ENCODE measurements at regions of chr6 and their contacts with region 1.

Region 1: GRCh38 chr6:163413345-163414116 is 987 bp upstream of the QKI start:
- DNase-seq: peak; percentile 92 to 98 (median 97)
- ATAC-seq: peak; percentile 60
- H3K4me3 ChIP-seq: peak overlapping the region; percentile 87
- H3K27ac ChIP-seq: peak overlapping the region; percentile 94
- H3K4me1 ChIP-seq: peaks cover 0 to 12% of the 10 kb centered on the region in 2 experiments; a peak in 4 of 5 replicates
- H3K27me3 ChIP-seq: no peaks in the 10 kb centered on the region
- CTCF ChIP-seq: 0 out of 6 replicates have a peak, but pooled peaks of 1 of the 3 experiments have one; percentile 6
- EP300 ChIP-seq: no peak
- POLR2A ChIP-seq: peak; percentile 79
- RAD21 ChIP-seq: 0 out of 4 replicates have a peak, but pooled peaks of 1 of the 2 experiments have one; percentile 1

Region 2: DNA sequence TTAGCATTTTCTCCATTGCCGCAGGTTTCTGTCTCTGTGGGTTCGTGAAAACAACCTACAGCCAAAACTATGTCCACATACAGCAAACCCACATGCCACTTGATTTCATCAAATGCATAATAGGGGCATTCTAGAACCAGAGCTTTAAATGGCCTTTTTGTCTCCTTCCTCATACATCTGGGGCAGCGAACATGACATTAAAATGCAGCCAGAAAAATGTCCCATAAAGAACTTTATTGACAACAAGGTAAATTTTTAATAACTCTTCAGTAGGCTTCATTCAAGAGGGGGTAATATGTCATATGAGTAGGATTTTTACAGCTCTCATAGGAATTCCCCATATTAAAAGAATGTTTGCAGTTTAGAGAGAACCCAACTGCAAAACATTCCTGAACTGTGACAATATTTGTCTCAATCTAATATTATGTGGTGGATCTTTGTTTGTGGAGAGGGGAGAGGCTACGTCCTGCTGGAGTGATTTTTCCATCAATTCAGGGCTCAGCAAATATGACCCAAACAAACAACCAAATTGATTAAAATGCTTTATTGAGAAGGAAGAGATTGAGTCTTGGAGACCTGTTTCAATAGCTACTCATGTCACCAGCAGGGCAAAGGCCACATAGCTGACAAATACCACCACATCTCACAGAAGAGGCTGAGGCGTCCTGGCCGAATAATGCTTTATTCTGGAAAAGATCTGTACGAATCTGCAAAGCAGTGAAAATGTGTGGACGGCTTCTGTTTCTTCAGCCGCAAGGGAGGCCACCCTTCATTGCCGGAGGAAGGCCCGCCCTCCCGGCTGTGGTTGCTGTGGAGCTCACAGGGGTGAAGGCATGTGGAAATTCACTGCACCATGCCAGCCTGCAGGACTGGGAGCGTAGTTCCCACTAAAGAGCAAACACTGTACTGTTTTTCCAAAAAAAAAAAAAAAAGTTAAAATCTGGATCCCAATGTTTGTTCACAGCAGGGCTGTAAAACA is 88.8 kb before region 1 on chr6:
- CTCF ChIA-PET with region 1: no interaction called
- POLR2A ChIA-PET with region 1: no interaction called
- in situ Hi-C with region 1: no loop called
- intact Hi-C with region 1: no loop called
- DNase-seq: no peak
- ATAC-seq: no peak
- H3K4me3 ChIP-seq: no peak overlapping the region
- H3K27ac ChIP-seq: no peak overlapping the region
- H3K4me1 ChIP-seq: no peaks in the 10 kb centered on the region
- H3K27me3 ChIP-seq: peaks cover 40 to 43% of the 10 kb centered on the region in 2 experiments
- CTCF ChIP-seq: no peak
- EP300 ChIP-seq: no peak
- POLR2A ChIP-seq: no peak
- RAD21 ChIP-seq: no peak

Region 3: GRCh38 chr6:163554663-163555062 is 141.1 kb after region 1 on chr6:
- CTCF ChIA-PET with region 1: interaction called, 3 read pairs
- POLR2A ChIA-PET with region 1: no interaction called
- in situ Hi-C with region 1: no loop called
- intact Hi-C with region 1: loop called (anchors 1 kb)
- DNase-seq: peak; percentile 47 to 71 (median 54)
- ATAC-seq: peak; percentile 91
- H3K4me3 ChIP-seq: no peak overlapping the region
- H3K27ac ChIP-seq: no peak overlapping the region
- H3K4me1 ChIP-seq: no peaks in the 10 kb centered on the region
- H3K27me3 ChIP-seq: no peaks in the 10 kb centered on the region
- CTCF ChIP-seq: peak; percentile 73 to 78 (median 73)
- EP300 ChIP-seq: no peak
- POLR2A ChIP-seq: no peak
- RAD21 ChIP-seq: peak; percentile 58 to 83

Region 4: DNA sequence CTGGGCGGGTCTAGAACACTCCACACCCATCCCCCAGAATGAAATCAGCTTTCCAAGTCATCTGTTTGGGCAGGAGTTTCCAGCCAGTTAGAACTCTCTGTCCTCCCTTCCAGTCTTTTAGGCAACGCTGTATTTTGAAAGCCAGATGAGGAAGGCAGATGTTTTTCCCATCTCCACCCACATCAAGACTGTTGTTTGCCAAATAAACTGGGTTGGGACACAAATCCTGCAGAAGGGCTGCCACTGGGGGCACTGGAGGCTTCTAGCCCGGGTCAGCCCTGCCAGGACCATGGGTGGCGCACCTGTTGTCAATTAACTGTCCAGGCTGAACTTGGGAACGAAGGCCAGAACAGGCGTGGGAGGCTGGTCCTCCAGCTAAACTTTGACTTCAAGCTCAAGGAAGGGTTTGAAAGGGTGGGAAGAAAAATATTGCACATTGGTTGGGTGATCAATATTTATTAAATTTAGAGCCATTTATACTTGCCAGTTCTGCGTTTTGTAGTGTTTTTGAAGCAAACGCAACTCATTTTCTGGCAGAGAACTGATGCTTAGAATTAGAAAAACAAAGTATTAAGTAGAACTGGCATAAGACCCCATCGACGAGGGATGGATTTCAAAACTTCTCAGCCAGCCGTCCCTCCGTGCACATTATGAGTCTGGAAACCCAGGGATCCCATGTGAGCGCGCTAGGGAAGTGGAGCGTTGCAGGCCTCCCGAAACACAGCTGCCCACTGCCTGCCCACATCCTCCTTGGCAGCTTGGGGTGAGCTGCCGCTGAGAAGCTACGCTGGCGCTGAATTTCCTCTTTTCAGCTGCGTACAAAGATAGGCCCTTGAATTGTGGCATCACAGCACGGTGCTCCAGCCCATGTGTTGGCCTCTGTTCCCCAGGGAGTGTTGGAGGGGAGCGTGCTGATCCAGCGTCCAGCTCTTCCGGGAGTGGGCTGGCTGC is 298.4 kb after region 1 on chr6:
- CTCF ChIA-PET with region 1: no interaction called
- POLR2A ChIA-PET with region 1: no interaction called
- in situ Hi-C with region 1: no loop called
- intact Hi-C with region 1: loop called (anchors 5 kb)
- DNase-seq: no peak
- ATAC-seq: peak; percentile 11; the same call in 1 of the 3 replicates
- H3K4me3 ChIP-seq: no peak overlapping the region
- H3K27ac ChIP-seq: no peak overlapping the region
- H3K4me1 ChIP-seq: peaks cover 6 to 8% of the 10 kb centered on the region in 2 experiments; a peak in 4 of 5 replicates
- H3K27me3 ChIP-seq: peaks cover 0 to 35% of the 10 kb centered on the region in 2 experiments; a peak in 2 of 5 replicates
- CTCF ChIP-seq: peak; percentile 29 to 38 (median 35); a peak in 3 of 6 replicates
- EP300 ChIP-seq: no peak
- POLR2A ChIP-seq: no peak
- RAD21 ChIP-seq: no peak

Region 5: GRCh38 chr6:164106345-164106769 is 692.8 kb after region 1 on chr6:
- CTCF ChIA-PET with region 1: no interaction called
- POLR2A ChIA-PET with region 1: no interaction called
- in situ Hi-C with region 1: no loop called
- intact Hi-C with region 1: loop called (anchors 5 kb)
- DNase-seq: peak; percentile 68 to 74 (median 70)
- ATAC-seq: peak; percentile 86
- H3K4me3 ChIP-seq: peak overlapping the region; percentile 14; the same call in 1 of the 2 replicates
- H3K27ac ChIP-seq: no peak overlapping the region
- H3K4me1 ChIP-seq: peaks cover 5 to 21% of the 10 kb centered on the region in 2 experiments; a peak in 4 of 5 replicates
- H3K27me3 ChIP-seq: peaks cover 2 to 12% of the 10 kb centered on the region in 2 experiments; a peak in 2 of 5 replicates
- CTCF ChIP-seq: peak; percentile 61 to 82 (median 68)
- EP300 ChIP-seq: no peak
- POLR2A ChIP-seq: no peak
- RAD21 ChIP-seq: peak; percentile 60 to 72

Region 6: DNA sequence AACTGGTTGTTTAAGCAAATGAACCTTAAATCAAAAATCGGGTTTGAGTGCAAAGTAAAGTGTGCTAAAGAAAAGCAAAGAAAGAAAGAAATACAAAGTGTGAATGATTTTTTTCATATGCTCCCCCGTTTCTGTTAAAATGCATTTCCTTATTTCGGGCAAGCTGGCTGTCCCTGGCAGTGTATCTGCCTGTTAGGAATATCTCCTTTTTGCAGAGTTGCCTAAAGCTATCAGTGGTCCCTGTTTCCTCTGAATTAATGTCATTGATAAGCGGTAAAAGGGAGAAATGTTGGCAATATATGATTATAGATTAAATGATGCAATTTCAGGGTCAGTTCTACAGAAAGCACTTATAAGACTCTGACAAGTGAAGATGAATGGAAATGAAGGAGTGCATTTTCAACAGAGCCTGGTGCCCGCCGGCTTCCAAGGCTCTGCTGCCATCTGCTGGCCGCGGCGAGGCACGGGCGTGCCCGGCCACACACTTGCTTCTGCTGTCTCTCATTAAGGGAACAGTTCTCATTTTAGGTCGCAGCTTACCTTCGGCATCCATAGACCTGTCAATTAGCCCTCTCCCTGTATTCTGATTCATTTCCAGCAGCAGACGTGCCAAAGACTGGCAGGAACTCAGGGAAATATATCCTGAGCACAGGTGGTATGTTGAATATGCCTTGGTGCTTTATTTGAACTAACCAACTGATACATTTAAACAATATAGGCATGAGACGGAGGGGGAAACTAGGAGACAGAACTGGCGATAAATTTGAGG is 1513.9 kb after region 1 on chr6:
- CTCF ChIA-PET with region 1: no interaction called
- POLR2A ChIA-PET with region 1: no interaction called
- in situ Hi-C with region 1: no loop called
- intact Hi-C with region 1: loop called (anchors 5 kb)
- DNase-seq: peak; percentile 48 to 65 (median 58)
- ATAC-seq: peak; percentile 98
- H3K4me3 ChIP-seq: no peak overlapping the region
- H3K27ac ChIP-seq: no peak overlapping the region
- H3K4me1 ChIP-seq: no peaks in the 10 kb centered on the region
- H3K27me3 ChIP-seq: no peaks in the 10 kb centered on the region
- CTCF ChIP-seq: peak; percentile 78 to 92 (median 85)
- EP300 ChIP-seq: no peak
- POLR2A ChIP-seq: no peak
- RAD21 ChIP-seq: peak; percentile 95

Measured in K562 (cell line).